ENCODE measurements at regions of chr16 and their contacts with region 1.

Region 1: DNA sequence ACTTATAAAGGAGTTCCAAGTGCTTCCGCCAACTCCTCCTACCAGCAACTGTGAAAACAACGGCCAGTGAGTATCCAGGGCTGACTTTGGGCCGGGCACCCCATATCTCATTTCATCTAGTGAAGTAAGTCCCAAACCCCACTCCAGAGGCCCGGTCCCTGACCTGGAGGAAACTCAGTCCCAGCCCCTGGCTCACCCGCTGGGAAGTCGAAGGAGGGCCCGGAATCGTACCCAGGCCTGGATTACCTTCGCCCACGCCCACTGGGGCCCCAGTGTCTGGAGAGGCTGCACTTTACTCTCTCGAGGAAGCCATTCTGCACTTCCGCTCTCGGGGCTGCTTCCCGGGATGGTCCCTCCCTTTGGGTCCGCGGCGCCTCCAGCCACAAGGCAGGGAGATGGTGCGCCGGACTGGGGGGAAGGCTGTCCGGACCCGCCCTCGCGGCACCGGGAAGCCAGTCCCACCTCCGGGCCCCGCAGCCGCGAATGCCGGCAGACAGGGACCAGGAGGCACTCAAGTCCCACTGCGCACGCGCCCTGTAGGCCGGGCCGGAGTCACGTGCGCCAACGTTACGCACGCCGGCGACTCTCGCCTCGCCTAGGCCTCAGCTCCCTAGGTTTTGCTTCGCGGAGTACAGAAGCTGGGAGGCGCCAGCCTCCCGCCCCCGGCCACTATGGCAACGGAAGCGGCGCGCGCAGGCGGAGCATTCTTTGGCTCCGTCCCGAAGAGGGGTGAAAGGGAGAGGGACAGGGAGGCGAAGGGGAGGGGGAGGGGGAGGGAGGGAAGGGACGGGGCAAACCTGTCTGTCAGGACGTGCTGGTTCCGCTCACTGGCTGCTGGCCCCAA is at the start of gene CMTR2:
- DNase-seq: peak; percentile 97
- ATAC-seq: peak; percentile 96
- H3K4me3 ChIP-seq: peak within 1 kb of the TSS; percentile 67
- H3K27ac ChIP-seq: peak within 1 kb of the TSS; percentile 79
- H3K4me1 ChIP-seq: no peaks in the 10 kb centered on the region; the same call in 1 of the 2 replicates
- H3K27me3 ChIP-seq: no peaks in the 10 kb centered on the region
- CTCF ChIP-seq: no peak
- POLR2A ChIP-seq: peak; percentile 86
- RAD21 ChIP-seq: no peak
- total RNA-seq, gene CMTR2: 21.9 and 33.6 TPM in 2 replicates

Region 2: DNA sequence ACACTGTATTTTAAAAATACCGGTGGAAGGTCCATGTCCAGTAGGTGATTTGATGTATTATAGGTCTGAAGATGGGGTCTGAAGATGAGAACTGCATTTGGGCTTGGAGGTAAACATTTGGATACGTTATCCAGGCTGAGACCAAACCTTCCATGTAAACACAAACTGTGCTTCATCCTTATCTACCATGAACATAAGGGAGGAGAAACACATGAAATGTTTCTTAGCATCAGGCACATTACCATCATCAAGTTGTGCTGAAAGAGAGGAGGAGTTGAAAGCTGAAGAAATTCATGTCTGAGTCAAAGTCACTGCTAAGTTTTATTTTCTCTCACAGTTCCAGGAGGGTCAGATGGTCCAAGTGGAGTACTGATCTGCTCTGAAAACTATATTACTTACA is 754.1 kb before region 1 on chr16:
- CTCF ChIA-PET with region 1: no interaction called
- POLR2A ChIA-PET with region 1: no interaction called
- dilution Hi-C with region 1: no loop called
- in situ Hi-C with region 1: no loop called
- intact Hi-C with region 1: no loop called
- DNase-seq: no peak
- ATAC-seq: no peak
- H3K4me3 ChIP-seq: no peak overlapping the region
- H3K27ac ChIP-seq: no peak overlapping the region
- H3K4me1 ChIP-seq: no peaks in the 10 kb centered on the region
- H3K27me3 ChIP-seq: no peaks in the 10 kb centered on the region
- CTCF ChIP-seq: no peak
- POLR2A ChIP-seq: no peak
- RAD21 ChIP-seq: no peak

Region 3: DNA sequence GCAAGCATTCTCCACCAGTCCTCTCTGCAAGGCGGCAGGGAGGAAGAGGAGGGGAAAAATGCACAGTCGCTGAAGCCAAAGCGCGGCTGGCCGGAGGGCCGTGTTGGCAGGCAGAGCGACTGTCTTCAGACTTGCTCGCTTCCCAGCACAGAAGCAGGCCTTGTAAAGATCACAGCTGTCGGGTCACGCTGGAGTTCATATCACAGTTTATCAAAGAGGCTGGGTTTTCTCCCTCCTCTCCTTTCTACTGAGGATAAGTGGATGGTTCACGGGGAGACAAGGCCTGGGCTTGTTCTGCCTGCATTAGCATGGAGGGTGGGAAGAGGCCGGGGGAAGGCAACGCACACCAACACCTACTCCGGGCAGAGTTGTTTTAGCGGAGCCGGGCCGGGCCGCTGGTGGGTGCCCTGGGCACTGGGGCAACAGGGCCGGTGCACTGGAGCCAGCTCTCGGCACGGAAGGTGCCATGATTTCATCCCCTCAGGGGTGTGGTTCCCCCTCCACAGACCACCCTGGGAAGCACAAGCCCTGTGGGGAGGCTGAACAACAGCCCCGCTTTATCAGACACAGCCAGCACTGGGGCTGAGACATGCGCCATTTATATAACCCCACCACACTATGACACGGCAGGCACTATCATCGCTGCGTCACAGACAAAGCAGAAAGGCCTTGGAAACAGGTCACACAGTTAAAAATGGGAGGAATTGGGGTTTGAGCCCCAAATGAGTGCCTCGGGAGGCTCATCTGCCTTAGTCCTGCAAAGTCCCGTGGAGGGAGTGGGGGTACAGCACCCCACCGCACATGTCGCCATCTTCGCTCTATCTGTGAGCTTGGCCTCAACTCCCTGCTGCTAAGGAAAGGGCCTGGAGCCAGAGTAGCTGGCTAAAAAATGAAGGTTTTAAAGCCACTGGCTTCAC is 562.9 kb before region 1 on chr16:
- CTCF ChIA-PET with region 1: no interaction called
- POLR2A ChIA-PET with region 1: no interaction called
- dilution Hi-C with region 1: no loop called
- in situ Hi-C with region 1: no loop called
- intact Hi-C with region 1: no loop called
- DNase-seq: peak; percentile 42
- ATAC-seq: peak; percentile 75
- H3K4me3 ChIP-seq: no peak overlapping the region
- H3K27ac ChIP-seq: peak overlapping the region; percentile 60; the same call in 1 of the 2 replicates
- H3K4me1 ChIP-seq: peaks cover 13% of the 10 kb centered on the region
- H3K27me3 ChIP-seq: no peaks in the 10 kb centered on the region
- CTCF ChIP-seq: no peak
- POLR2A ChIP-seq: no peak
- RAD21 ChIP-seq: no peak

Region 4: GRCh38 chr16:70778901-70779309 is 510.2 kb before region 1 on chr16:
- CTCF ChIA-PET with region 1: no interaction called
- POLR2A ChIA-PET with region 1: no interaction called
- dilution Hi-C with region 1: no loop called
- in situ Hi-C with region 1: loop called (anchors 25 kb)
- intact Hi-C with region 1: no loop called
- DNase-seq: peak; percentile 92
- ATAC-seq: peak; percentile 89
- H3K4me3 ChIP-seq: no peak overlapping the region
- H3K27ac ChIP-seq: no peak overlapping the region
- H3K4me1 ChIP-seq: peaks cover 3% of the 10 kb centered on the region; the same call in 1 of the 2 replicates
- H3K27me3 ChIP-seq: no peaks in the 10 kb centered on the region
- CTCF ChIP-seq: no peak
- POLR2A ChIP-seq: no peak
- RAD21 ChIP-seq: no peak

Region 5: GRCh38 chr16:71303938-71304337 is 14.8 kb after region 1 on chr16:
- CTCF ChIA-PET with region 1: no interaction called
- POLR2A ChIA-PET with region 1: interaction called, 21 read pairs
- dilution Hi-C with region 1: no loop called
- in situ Hi-C with region 1: no loop called
- intact Hi-C with region 1: no loop called
- DNase-seq: peak; percentile 4
- ATAC-seq: no peak
- H3K4me3 ChIP-seq: no peak overlapping the region
- H3K27ac ChIP-seq: no peak overlapping the region
- H3K4me1 ChIP-seq: no peaks in the 10 kb centered on the region
- H3K27me3 ChIP-seq: no peaks in the 10 kb centered on the region
- CTCF ChIP-seq: no peak
- POLR2A ChIP-seq: no peak
- RAD21 ChIP-seq: no peak